BJ (cell line): ENCODE measurements at regions of chr3 and their contacts with region 1.

Region 1: GRCh38 chr3:30751610-30752299 is 142.7 kb downstream of the GADL1 start:
- DNase-seq: no peak
- H3K4me3 ChIP-seq: no peak overlapping the region
- H3K27me3 ChIP-seq: no peaks in the 10 kb centered on the region
- CTCF ChIP-seq: peak; percentile 49

Region 2: GRCh38 chr3:30012941-30013543 is 738.7 kb before region 1 on chr3:
- CTCF ChIA-PET with region 1: interaction called, 12 read pairs
- POLR2A ChIA-PET with region 1: no interaction called
- DNase-seq: no peak
- H3K4me3 ChIP-seq: no peak overlapping the region
- H3K27me3 ChIP-seq: no peaks in the 10 kb centered on the region
- CTCF ChIP-seq: peak; percentile 61

Region 3: DNA sequence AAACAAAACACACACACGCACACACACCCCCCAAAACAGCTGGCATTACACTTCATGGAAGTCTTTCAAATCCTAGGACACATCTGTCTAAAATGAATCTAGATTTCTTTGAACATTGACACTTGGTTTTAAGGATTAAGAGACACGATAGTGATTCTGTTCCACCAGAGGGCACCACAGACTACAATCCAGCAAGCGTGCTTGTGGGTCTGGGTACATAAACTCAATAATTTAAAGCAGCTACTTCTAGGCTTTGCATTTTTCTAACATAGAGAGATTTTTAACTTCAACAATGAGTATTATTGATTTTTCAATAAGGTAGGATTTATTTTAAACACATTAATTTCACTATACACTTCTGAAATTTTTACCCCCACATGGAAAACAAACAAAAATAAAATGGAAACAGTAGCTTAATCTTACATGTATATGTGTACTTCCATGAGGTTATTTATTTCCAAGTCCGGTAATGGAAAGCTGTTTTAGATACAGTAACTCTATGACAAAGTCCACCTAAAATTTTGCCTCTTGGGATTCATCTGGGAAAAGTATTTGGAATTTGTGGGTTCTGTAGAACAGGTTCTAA is 709.4 kb before region 1 on chr3:
- CTCF ChIA-PET with region 1: interaction called, 29 read pairs
- POLR2A ChIA-PET with region 1: no interaction called
- DNase-seq: peak; percentile 10
- H3K4me3 ChIP-seq: no peak overlapping the region
- H3K27me3 ChIP-seq: no peaks in the 10 kb centered on the region
- CTCF ChIP-seq: peak; percentile 70

Region 4: DNA sequence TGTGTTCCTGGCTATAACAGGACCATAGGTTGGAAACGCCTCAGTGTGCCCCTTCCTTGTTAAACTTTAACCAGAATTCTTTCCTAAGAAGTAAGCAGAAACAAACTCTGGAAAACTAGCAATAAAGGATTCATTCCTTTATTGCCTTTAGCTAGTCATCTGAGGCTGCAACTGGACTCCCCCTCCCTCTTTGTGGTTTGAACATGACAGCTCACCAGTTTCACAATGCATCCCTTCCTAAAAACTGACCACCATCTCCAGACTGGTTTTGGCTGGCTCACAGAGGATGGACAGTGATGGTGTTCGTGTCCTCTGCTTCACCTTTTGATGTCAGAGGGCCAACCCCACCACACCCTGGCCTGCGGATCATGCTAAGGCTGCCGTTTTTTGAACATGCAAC is 173.3 kb before region 1 on chr3:
- CTCF ChIA-PET with region 1: no interaction called
- POLR2A ChIA-PET with region 1: no interaction called
- DNase-seq: peak; percentile 90
- H3K4me3 ChIP-seq: no peak overlapping the region
- H3K27me3 ChIP-seq: no peaks in the 10 kb centered on the region
- CTCF ChIP-seq: no peak

Region 5: GRCh38 chr3:30768703-30769685 is 17.2 kb after region 1 on chr3:
- CTCF ChIA-PET with region 1: interaction called, 32 read pairs
- POLR2A ChIA-PET with region 1: no interaction called
- DNase-seq: no peak
- H3K4me3 ChIP-seq: no peak overlapping the region
- H3K27me3 ChIP-seq: no peaks in the 10 kb centered on the region
- CTCF ChIP-seq: peak; percentile 84

Region 6: GRCh38 chr3:31105438-31106077 is 353.8 kb after region 1 on chr3:
- CTCF ChIA-PET with region 1: no interaction called
- POLR2A ChIA-PET with region 1: no interaction called
- DNase-seq: peak; percentile 76
- H3K4me3 ChIP-seq: no peak overlapping the region
- H3K27me3 ChIP-seq: no peaks in the 10 kb centered on the region
- CTCF ChIP-seq: no peak